Heart left ventricle (tissue), 16 donors: ENCODE measurements at regions of chr11 and their contacts with region 1.

Region 1: GRCh38 chr11:23423104-23423503 is 562.8 kb upstream of the CCDC179 start:
- DNase-seq: no peak
- ATAC-seq: no peak
- H3K4me3 ChIP-seq: no peak overlapping the region
- H3K27ac ChIP-seq: no peak overlapping the region
- H3K4me1 ChIP-seq: no peaks in the 10 kb centered on the region
- H3K27me3 ChIP-seq: no peaks in the 10 kb centered on the region
- CTCF ChIP-seq: no peak
- POLR2A ChIP-seq: no peak

Region 2: DNA sequence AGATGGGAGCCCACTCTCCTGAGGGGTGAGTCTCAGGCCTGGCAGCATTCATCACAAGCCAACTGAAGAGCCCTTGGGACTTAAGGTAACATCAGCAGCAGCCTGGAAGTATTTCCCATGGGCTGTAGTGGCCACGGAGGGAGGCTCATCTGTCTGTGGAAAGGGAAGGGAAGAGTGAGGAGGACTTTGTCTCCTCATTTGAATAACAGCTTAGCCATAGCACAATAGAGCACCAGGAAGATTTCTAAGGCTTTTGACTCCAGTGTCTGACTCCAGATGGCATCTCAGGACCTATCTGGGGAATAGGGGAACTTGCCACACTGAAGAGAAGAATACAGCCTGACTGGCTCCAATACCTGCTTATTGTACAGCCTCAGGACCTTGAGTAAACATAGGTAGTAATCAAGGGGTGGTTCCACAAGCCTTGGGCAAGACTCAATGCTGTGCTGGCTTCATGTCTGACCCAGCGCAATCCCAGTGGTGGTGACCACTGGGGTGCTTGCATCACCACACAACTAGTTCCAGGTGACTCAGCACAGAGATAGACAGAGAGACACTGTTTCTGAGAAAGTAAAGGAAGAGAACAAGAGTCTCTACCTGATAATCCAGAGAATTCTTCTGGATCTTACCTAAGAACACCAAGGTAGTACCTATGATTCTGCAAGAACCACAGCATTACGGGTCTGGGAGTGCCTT is 52.4 kb before region 1 on chr11:
- intact Hi-C with region 1: loop called in 1 of 10 experiments (anchors 5 kb)
- DNase-seq: no peak
- ATAC-seq: no peak
- H3K4me3 ChIP-seq: no peak overlapping the region
- H3K27ac ChIP-seq: no peak overlapping the region
- H3K4me1 ChIP-seq: no peaks in the 10 kb centered on the region
- H3K27me3 ChIP-seq: no peaks in the 10 kb centered on the region
- CTCF ChIP-seq: no peak
- POLR2A ChIP-seq: no peak

Region 3: DNA sequence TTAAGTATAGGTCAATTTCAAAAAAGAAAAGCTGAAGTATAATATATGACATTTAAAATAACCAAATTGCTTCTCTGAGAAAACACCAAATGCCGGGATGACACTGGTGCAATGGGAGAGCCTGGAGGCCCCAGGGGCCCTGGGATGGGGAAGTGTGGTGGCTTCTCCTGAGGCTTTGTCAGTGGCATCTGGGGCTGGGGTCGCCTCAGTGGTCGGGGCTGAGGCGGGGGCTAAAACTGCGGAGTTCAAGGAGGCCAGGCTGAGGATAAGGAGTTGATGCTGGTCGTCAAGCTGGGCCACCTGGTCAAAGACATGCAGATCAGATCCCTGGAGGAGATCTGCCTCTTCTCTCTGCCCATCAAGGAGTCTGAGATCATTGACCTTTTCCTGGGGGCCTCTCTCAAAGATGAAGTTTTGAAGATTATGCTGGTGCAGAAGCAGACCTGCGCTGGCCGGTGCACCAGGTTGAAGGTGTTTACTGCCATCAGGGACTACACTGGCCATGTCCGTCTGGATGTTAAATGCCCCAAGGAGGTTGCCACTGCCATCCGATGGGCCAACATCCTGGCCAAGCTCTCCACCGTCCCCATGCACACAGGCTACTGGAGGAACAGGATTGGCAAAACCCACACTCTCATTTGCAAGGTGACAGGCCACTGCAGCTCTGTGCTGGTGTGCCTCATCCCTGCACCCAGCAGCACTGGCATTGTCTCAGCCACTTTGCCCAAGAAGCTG is 97.3 kb after region 1 on chr11:
- intact Hi-C with region 1: no loop called
- DNase-seq: no peak
- ATAC-seq: no peak
- H3K4me3 ChIP-seq: no peak overlapping the region
- H3K27ac ChIP-seq: no peak overlapping the region
- H3K4me1 ChIP-seq: no peaks in the 10 kb centered on the region
- H3K27me3 ChIP-seq: no peaks in the 10 kb centered on the region
- CTCF ChIP-seq: no peak
- POLR2A ChIP-seq: no peak